Activated CD4-positive, alpha-beta memory T cell treated with anti-CD3 and anti-CD28 coated beads for 36 hours (primary cell): ENCODE measurements at regions of chr6 and their contacts with region 1.

Region 1: GRCh38 chr6:156883497-156884252 is 106.5 kb downstream of the ARID1B start:
- DNase-seq: no peak
- H3K4me3 Mint-ChIP-seq: no peak overlapping the region
- H3K27ac Mint-ChIP-seq: no peak overlapping the region
- H3K4me1 Mint-ChIP-seq: peaks cover 68% of the 10 kb centered on the region
- H3K27me3 Mint-ChIP-seq: no peaks in the 10 kb centered on the region

Region 2: GRCh38 chr6:156917213-156917612 is 33.5 kb after region 1 on chr6:
- CTCF ChIA-PET with region 1: no interaction called
- POLR2A ChIA-PET with region 1: no interaction called
- intact Hi-C with region 1: loop called (anchors 5 kb)
- DNase-seq: no peak
- H3K4me3 Mint-ChIP-seq: no peak overlapping the region
- H3K27ac Mint-ChIP-seq: no peak overlapping the region
- H3K4me1 Mint-ChIP-seq: peaks cover 49% of the 10 kb centered on the region
- H3K27me3 Mint-ChIP-seq: no peaks in the 10 kb centered on the region

Region 3: GRCh38 chr6:157013649-157014304 is 130.1 kb after region 1 on chr6:
- CTCF ChIA-PET with region 1: no interaction called
- POLR2A ChIA-PET with region 1: no interaction called
- intact Hi-C with region 1: no loop called
- DNase-seq: no peak
- H3K4me3 Mint-ChIP-seq: no peak overlapping the region
- H3K27ac Mint-ChIP-seq: no peak overlapping the region
- H3K4me1 Mint-ChIP-seq: peaks cover 37% of the 10 kb centered on the region
- H3K27me3 Mint-ChIP-seq: no peaks in the 10 kb centered on the region